Lower leg skin (tissue), 4 donors: ENCODE measurements at regions of chr6 and their contacts with region 1.

Region 1: DNA sequence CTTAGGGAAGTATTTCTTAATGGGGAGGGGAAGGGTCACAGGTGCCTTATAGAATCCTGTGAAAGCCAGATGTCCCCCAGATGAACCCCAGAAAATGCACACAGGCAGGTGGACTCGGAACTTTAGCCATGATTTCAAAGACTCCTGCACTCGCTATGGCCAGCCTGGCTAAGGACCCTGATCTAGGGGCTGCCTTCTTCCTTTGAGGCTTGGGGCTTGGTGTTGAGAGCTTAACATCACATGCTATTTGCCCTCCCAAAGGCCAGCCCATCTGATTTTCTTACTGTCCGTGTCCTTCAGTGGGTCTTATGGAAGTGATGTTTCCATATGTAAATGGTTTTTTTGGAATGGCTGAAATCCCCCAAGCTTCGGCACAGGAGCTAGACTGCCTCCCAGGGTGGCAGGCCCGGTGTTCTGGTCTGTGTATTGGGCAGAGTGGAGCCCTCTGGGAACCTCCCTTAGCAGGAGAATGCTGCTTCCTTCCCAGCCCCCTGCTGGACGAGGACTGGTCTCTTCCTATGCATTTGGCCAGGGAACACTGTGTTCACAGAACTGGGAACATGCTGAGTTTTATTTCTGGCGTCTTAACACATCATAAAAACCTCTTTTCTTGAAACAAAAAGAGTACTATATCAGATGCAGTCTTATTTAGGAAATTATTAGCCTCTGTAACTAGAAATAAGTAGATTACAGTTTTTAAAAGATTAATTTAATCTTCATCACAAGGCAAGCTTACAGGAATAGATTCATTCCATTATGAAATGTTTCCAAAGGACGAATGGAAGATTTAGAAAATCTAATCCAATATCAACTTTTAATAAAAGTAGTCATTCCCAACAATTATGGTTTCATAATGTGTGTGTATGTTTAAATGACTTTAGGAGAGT is 56.5 kb downstream of the SYTL3 start:
- DNase-seq: peak in 1 of 2 donors; percentile 88
- H3K4me3 ChIP-seq: no peak overlapping the region
- CTCF ChIP-seq: no peak
- POLR2A ChIP-seq: no peak

Region 2: GRCh38 chr6:158835616-158836221 is 129.4 kb after region 1 on chr6:
- intact Hi-C with region 1: no loop called
- DNase-seq: no peak
- H3K4me3 ChIP-seq: no peak overlapping the region
- CTCF ChIP-seq: no peak
- POLR2A ChIP-seq: no peak

Region 3: GRCh38 chr6:158972241-158973233 is 266.2 kb after region 1 on chr6:
- intact Hi-C with region 1: loop called (anchors 2 kb)
- DNase-seq: no peak
- H3K4me3 ChIP-seq: no peak overlapping the region
- CTCF ChIP-seq: no peak
- POLR2A ChIP-seq: no peak

Region 4: GRCh38 chr6:160328447-160328846 is 1622.1 kb after region 1 on chr6:
- intact Hi-C with region 1: no loop called
- DNase-seq: no peak
- H3K4me3 ChIP-seq: no peak overlapping the region
- CTCF ChIP-seq: no peak
- POLR2A ChIP-seq: no peak